ENCODE measurements at regions of chr15 and their contacts with region 1.

Region 1: DNA sequence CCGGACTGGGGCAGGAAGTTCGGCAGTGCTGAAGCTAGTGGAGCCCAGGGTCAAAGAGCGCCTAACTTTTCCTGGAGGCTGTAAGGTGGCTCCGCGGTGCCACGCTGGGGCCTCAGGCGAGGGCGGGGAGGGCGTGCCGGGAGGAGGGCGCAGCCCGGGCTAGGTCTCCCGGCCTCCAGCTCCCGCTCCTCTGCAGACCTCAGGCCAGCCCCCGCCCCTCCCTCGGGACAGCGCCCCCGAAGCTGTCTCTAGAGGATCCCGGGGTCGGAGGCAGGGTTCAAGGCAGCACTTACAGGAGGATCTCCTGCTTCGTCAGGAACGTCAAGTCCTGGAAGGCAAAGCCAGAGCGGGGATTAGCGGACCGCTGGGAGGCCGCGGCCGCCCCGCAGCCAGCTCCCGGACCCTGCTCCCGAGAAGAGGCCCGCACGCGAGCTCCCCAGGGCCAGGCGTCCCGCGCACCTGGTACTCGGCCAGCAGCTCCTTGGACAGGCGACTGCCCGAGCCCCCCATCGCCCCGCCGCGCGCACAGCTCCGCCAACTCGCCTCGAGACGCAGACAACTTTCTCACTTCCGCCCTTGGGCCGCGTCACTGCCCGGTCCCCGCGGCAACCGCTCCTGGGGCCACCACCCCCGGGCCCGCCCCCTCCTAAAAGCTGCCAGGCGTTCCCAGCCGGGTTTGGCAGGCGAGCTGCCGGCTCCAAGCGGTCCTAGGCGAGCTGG is at the start of gene CIB1:
- DNase-seq: peak; percentile 97 to 98 (median 98)
- ATAC-seq: peak; percentile 96
- H3K4me3 ChIP-seq: peak within 1 kb of the TSS; percentile 78
- H3K27ac ChIP-seq: peak within 1 kb of the TSS; percentile 83
- H3K4me1 ChIP-seq: peaks cover 7 to 35% of the 10 kb centered on the region in 2 experiments; a peak in 3 of 5 replicates
- H3K27me3 ChIP-seq: no peaks in the 10 kb centered on the region
- CTCF ChIP-seq: peak in 1 of 3 experiments; percentile 69; a peak in 3 of 6 replicates
- EP300 ChIP-seq: no peak
- POLR2A ChIP-seq: peak; percentile 78; the same call in 1 of the 2 replicates
- RAD21 ChIP-seq: no peak
- polyA plus RNA-seq, gene CIB1: 14.9 to 33.8 TPM

Region 2: DNA sequence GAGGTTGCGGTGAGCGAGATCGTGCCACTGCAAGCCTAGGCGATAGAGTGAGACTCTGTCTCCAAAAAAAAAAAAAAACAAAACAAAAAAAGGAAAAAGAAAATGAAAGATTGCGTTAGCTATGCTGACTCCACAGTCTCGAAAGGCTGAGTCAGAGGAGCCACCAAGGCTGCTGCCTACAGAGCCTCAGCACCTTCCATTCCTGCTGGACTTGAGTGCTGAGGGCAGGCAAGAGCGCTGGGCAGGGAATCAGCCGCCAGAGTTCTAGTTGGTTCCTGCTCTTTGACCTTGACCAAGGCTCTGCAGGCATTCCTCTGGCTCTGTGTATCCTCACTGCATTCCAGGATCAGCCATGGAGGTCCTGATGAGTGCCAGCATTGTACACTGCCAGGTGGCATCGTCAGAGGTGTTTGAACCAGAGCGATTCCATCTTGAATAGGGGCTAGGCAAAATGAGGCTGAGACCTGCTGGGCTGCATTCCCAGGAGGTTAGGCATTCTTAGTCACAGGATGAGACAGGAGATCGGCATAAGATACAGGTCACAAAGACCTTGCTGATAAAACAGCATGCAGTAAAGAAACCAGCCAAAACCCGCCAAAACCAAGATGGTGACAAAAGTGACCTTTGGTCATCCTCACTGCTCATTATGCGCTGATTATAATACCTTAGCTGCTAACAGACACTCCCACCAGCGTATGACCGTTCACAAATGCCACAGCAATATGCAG is 451.5 kb before region 1 on chr15:
- CTCF ChIA-PET with region 1: no interaction called
- POLR2A ChIA-PET with region 1: no interaction called
- in situ Hi-C with region 1: loop called (anchors 10 kb)
- intact Hi-C with region 1: no loop called
- DNase-seq: peak in 1 of 4 experiments; percentile 58
- ATAC-seq: peak; percentile 64
- H3K4me3 ChIP-seq: no peak overlapping the region
- H3K27ac ChIP-seq: peak overlapping the region; percentile 77
- H3K4me1 ChIP-seq: peaks cover 37 to 43% of the 10 kb centered on the region in 2 experiments
- H3K27me3 ChIP-seq: no peaks in the 10 kb centered on the region
- CTCF ChIP-seq: no peak
- EP300 ChIP-seq: peak; percentile 19; the same call in 1 of the 2 replicates
- POLR2A ChIP-seq: no peak
- RAD21 ChIP-seq: peak in 1 of 2 experiments; percentile 37; a peak in 1 of 4 replicates

Region 3: GRCh38 chr15:90143166-90143655 is 90.3 kb before region 1 on chr15:
- CTCF ChIA-PET with region 1: interaction called, 8 read pairs
- POLR2A ChIA-PET with region 1: interaction called, 4 read pairs
- in situ Hi-C with region 1: no loop called
- intact Hi-C with region 1: loop called (anchors 1 kb)
- DNase-seq: peak; percentile 96 to 98 (median 97)
- ATAC-seq: peak; percentile 98
- H3K4me3 ChIP-seq: no peak overlapping the region
- H3K27ac ChIP-seq: peak overlapping the region; percentile 83
- H3K4me1 ChIP-seq: peaks cover 28 to 35% of the 10 kb centered on the region in 2 experiments
- H3K27me3 ChIP-seq: no peaks in the 10 kb centered on the region
- CTCF ChIP-seq: peak; percentile 94 to 97 (median 97)
- EP300 ChIP-seq: peak; percentile 89
- POLR2A ChIP-seq: no peak
- RAD21 ChIP-seq: peak; percentile 98

Region 4: DNA sequence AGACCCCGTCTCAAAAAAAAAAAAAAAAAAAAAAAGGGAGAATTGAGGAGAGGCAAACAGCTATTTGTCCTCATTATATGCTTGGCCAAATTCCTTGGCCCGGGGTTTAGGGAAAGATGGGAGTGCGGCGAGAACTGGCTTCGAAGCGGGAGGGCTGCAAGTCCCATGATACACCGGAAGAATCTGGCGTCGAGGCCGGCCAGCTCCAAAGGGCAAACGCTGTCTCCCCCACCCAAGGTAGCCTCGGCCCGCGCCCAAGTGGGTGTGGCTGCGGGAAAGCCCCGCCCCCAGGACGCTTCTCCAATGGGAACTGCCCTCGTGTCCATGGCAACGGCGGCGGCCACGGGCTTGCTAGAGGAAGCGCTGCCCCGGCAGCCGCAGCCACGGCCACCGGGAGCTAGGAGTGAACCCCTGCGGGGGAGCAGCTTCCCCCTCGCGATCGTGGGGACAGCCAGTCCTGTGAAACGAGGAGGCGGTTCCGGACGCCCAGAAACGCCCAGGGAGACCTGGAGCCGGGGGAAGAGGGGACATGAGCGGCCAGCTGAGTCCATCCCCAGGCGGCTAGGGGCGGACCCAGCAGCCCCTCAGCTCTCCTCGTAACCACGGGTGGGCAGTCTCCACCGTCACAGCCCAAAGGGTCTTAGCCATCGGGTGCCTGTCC is 15.8 kb after region 1 on chr15 and contains the start of gene TTLL13:
- CTCF ChIA-PET with region 1: no interaction called
- POLR2A ChIA-PET with region 1: interaction called, 16 read pairs
- in situ Hi-C with region 1: no loop called
- intact Hi-C with region 1: no loop called
- DNase-seq: peak; percentile 94 to 97 (median 96)
- ATAC-seq: peak; percentile 98
- H3K4me3 ChIP-seq: peak within 1 kb of the TSS; percentile 51
- H3K27ac ChIP-seq: peak within 1 kb of the TSS; percentile 8; the same call in 2 of the 3 replicates
- H3K4me1 ChIP-seq: peaks cover 10 to 18% of the 10 kb centered on the region in 2 experiments; a peak in 4 of 5 replicates
- H3K27me3 ChIP-seq: no peaks in the 10 kb centered on the region
- CTCF ChIP-seq: 0 out of 6 replicates have a peak, but pooled peaks of 1 of the 3 experiments have one; percentile 7
- EP300 ChIP-seq: no peak
- POLR2A ChIP-seq: peak; percentile 67
- RAD21 ChIP-seq: no peak
- polyA plus RNA-seq, gene TTLL13: 0.10 to 0.17 TPM

Region 5: GRCh38 chr15:90265271-90266060 is 31.9 kb after region 1 on chr15 and contains the start of gene NGRN:
- CTCF ChIA-PET with region 1: no interaction called
- POLR2A ChIA-PET with region 1: interaction called, 4 read pairs
- in situ Hi-C with region 1: no loop called
- intact Hi-C with region 1: loop called (anchors 2 kb)
- DNase-seq: peak; percentile 89 to 94 (median 91)
- ATAC-seq: peak; percentile 95
- H3K4me3 ChIP-seq: peak within 1 kb of the TSS; percentile 64
- H3K27ac ChIP-seq: peak within 1 kb of the TSS; percentile 86
- H3K4me1 ChIP-seq: peaks cover 14 to 18% of the 10 kb centered on the region in 2 experiments
- H3K27me3 ChIP-seq: no peaks in the 10 kb centered on the region
- CTCF ChIP-seq: no peak
- EP300 ChIP-seq: no peak
- POLR2A ChIP-seq: peak; percentile 98
- RAD21 ChIP-seq: no peak; a peak in 1 of 4 replicates
- polyA plus RNA-seq, gene NGRN: 14.0 to 21.0 TPM

Region 6: DNA sequence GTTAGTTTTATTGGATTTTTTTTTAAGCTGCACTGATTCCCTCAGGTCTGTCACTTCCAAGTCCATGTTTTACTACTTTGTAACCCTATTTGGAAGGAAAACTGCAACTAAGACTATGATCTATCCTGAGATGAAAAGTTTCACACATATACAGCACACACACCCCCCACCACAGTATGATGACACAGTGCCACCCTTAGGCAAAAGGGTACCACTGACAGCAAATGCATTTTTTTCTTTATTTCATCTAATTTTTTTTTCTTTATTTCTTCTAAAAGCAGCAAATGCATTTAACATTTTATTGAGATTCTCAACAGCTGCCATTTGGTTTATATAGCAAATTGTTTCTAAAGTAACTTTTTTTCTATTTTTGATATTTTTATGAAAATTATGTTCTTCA is 53.1 kb after region 1 on chr15:
- CTCF ChIA-PET with region 1: no interaction called
- POLR2A ChIA-PET with region 1: no interaction called
- in situ Hi-C with region 1: no loop called
- intact Hi-C with region 1: loop called (anchors 5 kb)
- DNase-seq: peak in 2 of 4 experiments; percentile 45 to 55
- ATAC-seq: peak; percentile 92
- H3K4me3 ChIP-seq: no peak overlapping the region
- H3K27ac ChIP-seq: no peak overlapping the region
- H3K4me1 ChIP-seq: peaks cover 2 to 3% of the 10 kb centered on the region in 2 experiments; a peak in 3 of 5 replicates
- H3K27me3 ChIP-seq: no peaks in the 10 kb centered on the region
- CTCF ChIP-seq: peak; percentile 68 to 91 (median 68)
- EP300 ChIP-seq: no peak
- POLR2A ChIP-seq: no peak
- RAD21 ChIP-seq: peak; percentile 88 to 89